Ascending aorta (tissue), 2 donors: ENCODE measurements at regions of chr3 and their contacts with region 1.

Region 1: GRCh38 chr3:191414732-191415131 is 46.2 kb upstream of the PYDC2 start:
- DNase-seq: no peak
- H3K4me3 ChIP-seq: no peak overlapping the region
- H3K27ac ChIP-seq: no peak overlapping the region
- H3K4me1 ChIP-seq: no peaks in the 10 kb centered on the region
- H3K27me3 ChIP-seq: no peaks in the 10 kb centered on the region
- CTCF ChIP-seq: no peak

Region 2: DNA sequence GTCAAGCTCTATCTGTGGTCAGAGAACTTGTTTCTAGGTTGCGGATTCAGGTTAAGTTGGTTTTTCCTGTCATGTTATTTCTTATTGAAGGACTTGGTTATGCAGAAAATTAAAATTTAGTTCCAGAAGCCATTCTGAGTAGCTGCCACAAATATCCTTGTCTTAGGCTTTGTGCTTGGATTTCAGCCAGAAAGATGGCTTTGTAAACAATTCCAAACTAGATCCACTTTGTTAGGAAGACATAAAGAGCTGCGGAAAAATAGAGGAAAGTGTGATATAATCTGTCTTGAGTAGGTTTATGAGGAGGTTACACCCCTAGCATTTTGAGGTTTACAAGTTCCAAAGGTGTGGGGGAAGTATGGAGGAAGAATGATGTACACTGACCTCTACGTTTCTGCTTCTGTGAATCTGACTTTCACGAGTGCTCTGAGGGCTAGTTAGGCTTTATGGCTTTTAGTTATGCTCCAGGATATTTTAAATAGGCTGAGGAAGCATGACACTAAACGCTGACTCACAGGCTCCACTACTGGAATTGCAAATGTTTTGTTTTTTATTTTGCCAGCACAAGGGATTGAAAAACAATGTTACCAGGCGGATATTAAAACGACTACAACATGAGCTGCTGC is 38.1 kb before region 1 on chr3:
- intact Hi-C with region 1: no loop called
- DNase-seq: no peak
- H3K4me3 ChIP-seq: no peak overlapping the region
- H3K27ac ChIP-seq: peak overlapping the region in 1 of 2 donors; percentile 20
- H3K4me1 ChIP-seq: peaks cover 3 to 13% of the 10 kb centered on the region in 2 donors
- H3K27me3 ChIP-seq: no peaks in the 10 kb centered on the region
- CTCF ChIP-seq: no peak

Region 3: DNA sequence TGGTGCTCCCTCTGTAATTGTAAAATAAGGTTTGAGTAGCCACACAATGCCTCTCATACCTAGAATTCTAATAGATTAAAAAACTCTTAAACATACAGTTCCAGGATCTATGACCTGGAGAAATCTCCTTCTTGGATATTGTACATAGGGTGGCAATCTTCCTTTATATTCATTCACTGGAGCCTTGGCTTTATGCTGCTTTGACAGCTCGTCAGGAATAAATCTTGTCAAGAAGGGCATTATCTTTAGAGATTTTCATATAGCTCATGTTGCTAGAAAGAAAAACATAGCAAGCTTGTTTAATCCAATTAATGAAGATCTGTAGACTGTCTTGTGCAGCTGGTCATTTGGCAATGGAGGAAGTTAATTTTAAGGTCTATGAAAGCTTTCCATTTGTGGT is 177.4 kb after region 1 on chr3:
- intact Hi-C with region 1: no loop called
- DNase-seq: no peak
- H3K4me3 ChIP-seq: no peak overlapping the region
- H3K27ac ChIP-seq: no peak overlapping the region
- H3K4me1 ChIP-seq: no peaks in the 10 kb centered on the region
- H3K27me3 ChIP-seq: no peaks in the 10 kb centered on the region
- CTCF ChIP-seq: no peak

Region 4: DNA sequence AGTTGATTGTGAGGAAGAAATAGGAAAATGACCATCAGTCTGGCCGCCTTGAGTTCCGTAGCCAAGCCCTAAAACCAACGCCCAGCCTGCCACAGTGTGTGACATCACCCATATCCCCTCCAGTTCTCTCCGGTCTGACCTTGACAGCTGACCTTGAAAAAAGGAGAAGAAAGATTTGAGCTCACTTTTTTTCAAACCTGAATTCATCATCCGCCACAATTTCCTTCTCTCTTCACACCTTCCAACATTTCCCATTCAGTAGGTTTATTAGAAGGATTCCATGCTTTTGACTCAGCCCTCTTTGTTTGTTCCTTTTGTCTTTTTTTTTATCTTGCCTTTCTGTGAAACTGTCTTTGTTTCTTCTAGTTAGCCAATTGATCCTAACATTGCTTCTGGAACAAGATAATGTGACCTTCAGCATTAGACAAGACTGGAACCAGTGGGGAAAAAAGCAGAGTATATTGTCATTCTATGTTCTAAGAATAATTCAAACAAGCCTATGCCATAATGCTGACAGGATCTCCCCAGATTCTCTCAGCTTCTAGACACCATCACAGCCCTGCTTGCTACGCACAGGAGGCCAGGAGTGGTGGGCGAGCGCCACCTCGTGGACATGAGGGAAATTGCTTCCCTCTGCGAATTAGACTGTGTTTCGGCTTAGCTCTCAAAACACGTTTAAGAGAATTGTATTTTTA is 1029.5 kb after region 1 on chr3:
- intact Hi-C with region 1: loop called (anchors 5 kb)
- DNase-seq: peak in 1 of 2 donors; percentile 66
- H3K4me3 ChIP-seq: no peak overlapping the region
- H3K27ac ChIP-seq: no peak overlapping the region
- H3K4me1 ChIP-seq: no peaks in the 10 kb centered on the region
- H3K27me3 ChIP-seq: no peaks in the 10 kb centered on the region
- CTCF ChIP-seq: peak; percentile 40 to 82 (median 75)